Posterior cingulate gyrus (tissue), 11 donors: ENCODE measurements at regions of chr4 and their contacts with region 1.

Region 1: GRCh38 chr4:40736910-40737309 is 12.8 kb upstream of the NSUN7 start:
- DNase-seq: no peak

Region 2: GRCh38 chr4:40482985-40483647 is 253.8 kb before region 1 on chr4:
- intact Hi-C with region 1: no loop called
- DNase-seq: no peak

Region 3: GRCh38 chr4:40788331-40788730 is 51.4 kb after region 1 on chr4:
- intact Hi-C with region 1: no loop called
- DNase-seq: no peak

Region 4: GRCh38 chr4:40840985-40841571 is 104.2 kb after region 1 on chr4:
- intact Hi-C with region 1: loop called (anchors 10 kb)
- DNase-seq: peak in 9 of 10 donors; percentile 51 to 95 (median 75)

Region 5: DNA sequence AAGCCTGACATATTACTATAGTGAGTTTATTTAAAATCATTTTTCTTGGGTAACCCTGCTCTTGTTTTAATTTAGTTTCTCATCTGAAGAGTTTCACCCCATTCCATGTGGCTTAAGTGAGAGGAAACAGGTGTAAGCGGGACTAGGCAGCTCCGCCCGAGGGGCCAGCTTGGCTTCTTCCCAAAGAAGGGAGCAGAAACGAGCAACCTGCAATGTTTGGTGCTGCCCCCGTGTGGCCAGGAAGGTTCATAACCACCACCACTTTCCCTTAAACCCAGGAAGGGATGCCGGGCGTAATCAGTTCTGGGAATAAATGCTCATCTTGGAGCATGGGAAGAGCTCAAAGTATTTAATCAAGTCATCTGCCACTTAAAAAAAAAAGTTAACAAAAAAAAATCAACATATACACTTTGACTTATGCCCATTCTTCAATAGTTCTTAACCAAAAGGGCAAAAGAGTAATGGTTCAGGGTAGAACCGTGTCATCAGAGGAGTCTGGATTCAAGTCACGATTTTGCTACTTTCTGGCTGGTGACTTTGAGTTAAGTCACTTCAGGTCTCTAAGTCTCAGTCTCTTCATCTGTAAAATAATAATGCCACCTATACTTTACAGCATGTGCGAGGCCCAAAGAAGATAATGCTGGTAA is 160.8 kb after region 1 on chr4:
- intact Hi-C with region 1: loop called (anchors 2 kb)
- DNase-seq: peak; percentile 46 to 96 (median 81)